ENCODE measurements at regions of chr7 and their contacts with region 1.

Region 1: DNA sequence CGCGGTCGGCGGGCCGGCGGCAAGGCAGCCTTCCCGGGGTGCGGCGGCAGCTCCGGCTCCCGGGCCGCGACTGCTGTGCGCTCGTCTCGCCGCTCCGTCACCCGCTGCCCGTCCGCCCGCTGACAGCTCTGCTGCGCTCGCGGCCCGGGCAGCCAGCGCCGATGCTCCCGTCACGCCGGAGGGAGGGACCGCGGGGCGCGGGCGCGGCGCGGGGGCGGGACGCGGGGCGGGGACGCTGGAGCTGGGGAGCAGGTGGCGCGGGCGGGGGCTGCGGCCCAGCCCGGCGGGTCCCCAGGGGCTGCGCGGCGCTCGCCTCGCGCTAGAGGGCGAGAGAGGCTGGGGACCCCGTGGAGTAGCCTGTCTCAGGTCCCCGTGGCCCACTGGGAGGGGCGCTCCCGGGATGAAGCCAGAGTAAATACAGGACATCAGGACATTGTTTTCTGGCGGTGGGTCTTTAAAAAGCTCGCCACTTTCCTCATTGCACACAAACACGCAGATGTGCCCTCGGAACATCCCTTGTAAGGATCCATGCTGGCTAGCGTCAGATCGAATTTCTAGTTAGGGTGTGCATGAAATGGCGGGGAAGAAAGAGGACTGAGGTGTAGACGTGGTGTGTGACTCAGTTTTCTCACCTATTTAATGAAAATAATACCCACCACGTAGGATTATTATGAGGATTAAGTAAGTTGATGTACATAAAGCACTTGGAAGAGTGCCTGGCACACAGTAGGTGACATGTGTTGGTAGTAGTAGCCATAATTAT is at the start of gene ELAPOR2:
- DNase-seq: peak; percentile 76 to 84
- ATAC-seq: peak; percentile 96 to 99 (median 98)
- H3K4me3 ChIP-seq: peak within 1 kb of the TSS; percentile 41 to 83 (median 68)
- H3K27ac ChIP-seq: peak within 1 kb of the TSS in 8 of 10 donors; percentile 23 to 69 (median 60)
- H3K4me1 ChIP-seq: peaks cover 4 to 45% (median 16%) of the 10 kb centered on the region in 9 donors
- H3K27me3 ChIP-seq: peaks cover 0 to 21% (median 0%) of the 10 kb centered on the region in 7 donors
- CTCF ChIP-seq: peak; percentile 22 to 73 (median 49)
- total RNA-seq, gene ELAPOR2: 2.5 to 7.5 (median 4.7) TPM

Region 2: DNA sequence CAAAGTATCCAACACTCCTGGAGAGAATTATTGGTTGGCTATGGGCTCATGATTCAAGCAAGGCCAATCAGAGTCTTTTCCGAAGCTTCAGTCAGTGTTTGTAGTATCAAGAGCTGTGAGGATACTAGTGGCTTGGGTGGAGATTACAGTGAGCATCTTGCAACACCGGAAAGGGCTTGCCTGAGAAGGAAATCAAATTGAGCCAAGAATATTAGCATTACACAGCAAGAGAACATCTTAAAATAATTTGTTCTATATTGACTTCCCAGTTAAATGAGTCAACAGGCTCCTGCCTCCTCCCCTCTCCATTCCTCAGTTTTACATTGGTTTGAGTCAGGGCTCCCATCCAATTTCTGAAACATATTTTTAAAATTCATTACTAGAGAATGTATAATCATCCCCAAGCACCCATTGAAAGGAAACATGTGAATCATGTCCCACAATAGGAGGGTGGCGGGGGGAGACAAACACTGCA is 127.6 kb before region 1 on chr7:
- intact Hi-C with region 1: loop called in 4 of 10 experiments (anchors 5 to 10 kb)
- DNase-seq: no peak
- ATAC-seq: peak; percentile 71 to 98 (median 92)
- H3K4me3 ChIP-seq: no peak overlapping the region
- H3K27ac ChIP-seq: peak overlapping the region in 9 of 10 donors; percentile 1 to 82 (median 59)
- H3K4me1 ChIP-seq: peaks cover 0 to 17% (median 9%) of the 10 kb centered on the region in 9 donors
- H3K27me3 ChIP-seq: no peaks in the 10 kb centered on the region
- CTCF ChIP-seq: no peak

Region 3: GRCh38 chr7:86949052-86949778 is 110.5 kb before region 1 on chr7:
- intact Hi-C with region 1: loop called in 1 of 10 experiments (anchors 10 kb)
- DNase-seq: no peak
- ATAC-seq: peak in 1 of 8 donors; percentile 10
- H3K4me3 ChIP-seq: no peak overlapping the region
- H3K27ac ChIP-seq: no peak overlapping the region
- H3K4me1 ChIP-seq: peaks cover 0 to 8% (median 0%) of the 10 kb centered on the region in 9 donors
- H3K27me3 ChIP-seq: no peaks in the 10 kb centered on the region
- CTCF ChIP-seq: no peak

Region 4: DNA sequence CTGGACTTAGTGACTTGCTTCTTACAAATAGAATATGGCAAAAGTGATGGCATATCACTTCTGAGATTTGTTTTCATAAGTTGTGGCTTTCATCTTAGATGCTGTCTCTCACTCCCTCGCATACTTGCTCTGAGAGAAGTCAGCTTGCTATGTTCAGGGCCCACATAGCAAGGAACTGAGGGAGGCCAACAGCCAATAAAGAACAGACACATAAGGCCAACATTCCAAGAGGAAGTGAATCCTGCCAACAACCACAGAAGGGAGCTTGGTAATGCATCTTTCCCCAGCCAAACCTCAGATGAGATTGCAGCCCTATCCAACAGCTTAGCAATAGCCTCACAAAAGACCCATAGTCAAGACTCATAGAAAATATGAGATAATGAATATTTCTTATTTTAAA is 53.4 kb after region 1 on chr7:
- intact Hi-C with region 1: no loop called
- DNase-seq: peak in 1 of 2 donors; percentile 16
- ATAC-seq: peak in 2 of 8 donors; percentile 27 to 38
- H3K4me3 ChIP-seq: no peak overlapping the region
- H3K27ac ChIP-seq: no peak overlapping the region
- H3K4me1 ChIP-seq: no peaks in the 10 kb centered on the region
- H3K27me3 ChIP-seq: no peaks in the 10 kb centered on the region
- CTCF ChIP-seq: no peak

Region 5: GRCh38 chr7:87152107-87152844 is 92.6 kb after region 1 on chr7 and contains the start of gene DMTF1:
- intact Hi-C with region 1: loop called in 4 of 10 experiments (anchors 5 kb)
- DNase-seq: peak; percentile 95
- ATAC-seq: peak; percentile 95 to 99 (median 98)
- H3K4me3 ChIP-seq: peak within 1 kb of the TSS; percentile 57 to 86 (median 77)
- H3K27ac ChIP-seq: peak within 1 kb of the TSS; percentile 94 to 99 (median 97)
- H3K4me1 ChIP-seq: peaks cover 0 to 53% (median 45%) of the 10 kb centered on the region in 9 donors
- H3K27me3 ChIP-seq: no peaks in the 10 kb centered on the region
- CTCF ChIP-seq: peak in 4 of 9 donors; percentile 3 to 21 (median 16)
- total RNA-seq, gene DMTF1: 18.0 to 26.5 (median 21.8) TPM

Region 6: GRCh38 chr7:87231256-87231655 is 171.6 kb after region 1 on chr7:
- intact Hi-C with region 1: loop called in 2 of 10 experiments (anchors 10 kb)
- DNase-seq: peak; percentile 28 to 55
- ATAC-seq: peak; percentile 55 to 84 (median 77)
- H3K4me3 ChIP-seq: no peak overlapping the region
- H3K27ac ChIP-seq: no peak overlapping the region
- H3K4me1 ChIP-seq: peaks cover 0 to 12% (median 0%) of the 10 kb centered on the region in 9 donors
- H3K27me3 ChIP-seq: peaks cover 0 to 6% (median 0%) of the 10 kb centered on the region in 7 donors
- CTCF ChIP-seq: no peak